ENCODE measurements at regions of chr7 and their contacts with region 1.

Region 1: GRCh38 chr7:35985126-35985754 is 167.8 kb upstream of the EEPD1 start:
- DNase-seq: peak; percentile 96
- H3K4me3 ChIP-seq: no peak overlapping the region; a peak in 1 of 4 replicates
- H3K27ac ChIP-seq: no peak overlapping the region
- H3K4me1 ChIP-seq: no peaks in the 10 kb centered on the region; a peak in 1 of 4 replicates
- H3K27me3 ChIP-seq: no peaks in the 10 kb centered on the region
- CTCF ChIP-seq: peak; percentile 100
- EP300 ChIP-seq: no peak
- RAD21 ChIP-seq: peak; percentile 100

Region 2: GRCh38 chr7:36005293-36005692 is 20.1 kb after region 1 on chr7:
- CTCF ChIA-PET with region 1: interaction called, 15 read pairs
- POLR2A ChIA-PET with region 1: no interaction called
- DNase-seq: no peak
- H3K4me3 ChIP-seq: no peak overlapping the region
- H3K27ac ChIP-seq: no peak overlapping the region
- H3K4me1 ChIP-seq: no peaks in the 10 kb centered on the region
- H3K27me3 ChIP-seq: no peaks in the 10 kb centered on the region
- CTCF ChIP-seq: no peak
- EP300 ChIP-seq: no peak
- RAD21 ChIP-seq: no peak

Region 3: DNA sequence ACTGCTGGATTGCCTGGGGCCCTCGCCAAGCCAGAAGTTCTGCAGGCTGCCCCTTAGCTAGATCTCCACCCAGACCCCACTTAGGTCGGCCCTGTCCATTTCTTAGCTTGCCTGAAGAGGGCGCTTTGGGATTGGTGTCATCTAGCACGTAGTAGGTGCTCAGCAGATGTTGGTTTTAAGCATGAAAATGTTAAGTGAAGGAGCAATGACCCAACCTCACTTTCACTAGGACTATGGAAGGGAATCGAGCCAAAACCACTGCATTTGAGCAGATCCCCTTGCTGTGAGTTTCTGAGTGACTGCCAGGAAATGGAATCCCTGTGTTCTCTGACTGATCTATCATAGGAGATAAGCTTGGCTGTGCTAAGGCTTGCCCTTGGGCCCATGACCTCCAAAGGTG is 36.1 kb after region 1 on chr7:
- CTCF ChIA-PET with region 1: interaction called, 14 read pairs
- POLR2A ChIA-PET with region 1: no interaction called
- DNase-seq: no peak
- H3K4me3 ChIP-seq: no peak overlapping the region
- H3K27ac ChIP-seq: no peak overlapping the region
- H3K4me1 ChIP-seq: peaks cover 0 to 12% of the 10 kb centered on the region in 2 experiments; a peak in 1 of 4 replicates
- H3K27me3 ChIP-seq: no peaks in the 10 kb centered on the region
- CTCF ChIP-seq: peak; percentile 67
- EP300 ChIP-seq: no peak
- RAD21 ChIP-seq: peak; percentile 59

Region 4: GRCh38 chr7:36048141-36048901 is 63.1 kb after region 1 on chr7:
- CTCF ChIA-PET with region 1: interaction called, 22 read pairs
- POLR2A ChIA-PET with region 1: no interaction called
- DNase-seq: peak; percentile 58
- H3K4me3 ChIP-seq: no peak overlapping the region; a peak in 1 of 4 replicates
- H3K27ac ChIP-seq: peak overlapping the region; percentile 71 to 86
- H3K4me1 ChIP-seq: peaks cover 21% of the 10 kb centered on the region in 2 experiments
- H3K27me3 ChIP-seq: no peaks in the 10 kb centered on the region
- CTCF ChIP-seq: no peak
- EP300 ChIP-seq: peak; percentile 87 to 96
- RAD21 ChIP-seq: peak; percentile 10

Region 5: GRCh38 chr7:36153571-36154097 is 168.4 kb after region 1 on chr7:
- CTCF ChIA-PET with region 1: interaction called, 11 read pairs
- POLR2A ChIA-PET with region 1: no interaction called
- DNase-seq: no peak
- H3K4me3 ChIP-seq: peak overlapping the region; percentile 87 to 93
- H3K27ac ChIP-seq: peak overlapping the region; percentile 56 to 73
- H3K4me1 ChIP-seq: peaks cover 0 to 45% of the 10 kb centered on the region in 2 experiments; a peak in 2 of 4 replicates
- H3K27me3 ChIP-seq: no peaks in the 10 kb centered on the region
- CTCF ChIP-seq: no peak
- EP300 ChIP-seq: no peak
- RAD21 ChIP-seq: no peak

Region 6: GRCh38 chr7:36280840-36281812 is 295.9 kb after region 1 on chr7:
- CTCF ChIA-PET with region 1: interaction called, 369 read pairs
- POLR2A ChIA-PET with region 1: no interaction called
- DNase-seq: peak; percentile 69
- H3K4me3 ChIP-seq: peak overlapping the region; percentile 28 to 39
- H3K27ac ChIP-seq: peak overlapping the region; percentile 63 to 74
- H3K4me1 ChIP-seq: peaks cover 32 to 54% of the 10 kb centered on the region in 2 experiments
- H3K27me3 ChIP-seq: no peaks in the 10 kb centered on the region
- CTCF ChIP-seq: no peak
- EP300 ChIP-seq: 0 out of 4 replicates have a peak, but pooled peaks of 1 of the 2 experiments have one; percentile 19
- RAD21 ChIP-seq: no peak; the same call in 1 of the 2 replicates

Region 7: DNA sequence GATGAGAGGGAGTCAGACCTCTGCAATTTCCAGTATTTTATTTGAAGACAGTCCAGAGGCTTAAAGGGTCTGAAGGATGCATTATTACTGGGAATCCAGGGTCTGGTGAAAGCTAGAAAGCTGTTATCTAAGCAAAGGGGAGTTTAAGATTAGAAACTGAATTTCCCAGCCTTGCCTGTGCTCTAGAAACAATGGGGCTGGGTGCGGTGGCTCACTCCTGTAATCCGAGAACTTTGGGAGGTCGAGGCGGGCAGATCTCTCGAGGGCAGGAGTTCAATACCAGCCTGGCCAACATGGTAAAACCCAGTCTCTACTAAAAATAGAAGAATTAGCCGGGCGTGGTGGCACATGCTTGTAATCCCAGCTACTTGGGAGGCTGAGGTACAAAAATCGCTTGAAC is 332.9 kb after region 1 on chr7:
- CTCF ChIA-PET with region 1: interaction called, 178 read pairs
- POLR2A ChIA-PET with region 1: no interaction called
- DNase-seq: no peak
- H3K4me3 ChIP-seq: no peak overlapping the region
- H3K27ac ChIP-seq: no peak overlapping the region
- H3K4me1 ChIP-seq: peaks cover 0 to 10% of the 10 kb centered on the region in 2 experiments; a peak in 1 of 4 replicates
- H3K27me3 ChIP-seq: no peaks in the 10 kb centered on the region
- CTCF ChIP-seq: no peak
- EP300 ChIP-seq: no peak
- RAD21 ChIP-seq: no peak

Measured in SK-N-SH (cell line).